ENCODE measurements at regions of chr19 and their contacts with region 1.

Region 1: GRCh38 chr19:2328401-2329148 is at the starts of genes LSM7 and SPPL2B:
- DNase-seq: peak; percentile 91 to 92 (median 91)
- H3K4me3 ChIP-seq: peak within 1 kb of the TSS; percentile 82 to 88
- H3K4me3 Mint-ChIP-seq: peak within 1 kb of the TSS; percentile 99 to 100 (median 100)
- H3K27ac ChIP-seq: peak within 1 kb of the TSS; percentile 76
- H3K27ac Mint-ChIP-seq: peak within 1 kb of the TSS; percentile 97 to 100 (median 99)
- H3K4me1 ChIP-seq: peaks cover 49% of the 10 kb centered on the region
- H3K4me1 Mint-ChIP-seq: peaks cover 22 to 61% (median 47%) of the 10 kb centered on the region in 4 donors
- H3K27me3 ChIP-seq: no peaks in the 10 kb centered on the region
- H3K27me3 Mint-ChIP-seq: no peaks in the 10 kb centered on the region
- total RNA-seq, gene LSM7: 107 to 108 TPM
- total RNA-seq, gene SPPL2B: 76.8 to 82.8 TPM

Region 2: DNA sequence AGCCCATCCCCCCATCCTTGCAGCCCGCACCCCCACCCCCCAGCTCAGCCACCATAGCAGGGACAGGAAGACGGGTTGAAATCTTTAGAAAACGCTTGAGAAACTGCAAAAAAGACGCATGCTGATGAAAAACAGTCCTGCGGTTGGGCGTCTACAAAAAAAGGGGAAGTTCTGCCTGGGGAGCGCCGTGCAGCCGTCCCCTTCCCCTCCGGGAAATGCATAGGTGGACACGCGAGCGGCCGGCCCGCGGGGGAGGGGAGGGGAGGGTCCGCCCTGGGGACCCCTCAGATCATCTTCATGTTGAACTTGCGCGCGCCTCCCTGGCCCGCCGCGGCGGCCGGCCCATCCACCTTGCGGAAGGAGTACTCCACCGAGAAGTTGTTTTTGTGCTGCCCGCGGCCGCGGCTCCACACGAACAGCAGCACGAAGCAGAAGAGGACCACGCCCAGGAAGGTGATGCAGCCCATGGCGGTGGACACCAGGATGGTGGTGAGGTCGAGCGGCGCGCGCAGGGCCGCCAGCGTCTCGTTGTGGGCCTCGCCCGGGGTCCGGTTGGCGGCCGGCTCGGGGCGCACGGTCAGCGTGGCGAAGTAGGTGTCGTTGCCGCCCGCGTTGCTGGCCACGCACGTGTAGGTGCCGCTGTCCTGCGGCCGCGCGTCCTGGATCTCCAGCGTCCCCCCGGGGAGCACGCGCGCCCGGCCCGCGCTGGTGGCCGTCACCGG is 38.7 kb before region 1 on chr19:
- CTCF ChIA-PET with region 1: no interaction called
- POLR2A ChIA-PET with region 1: interaction called, 8 read pairs
- intact Hi-C with region 1: loop called (anchors 5 kb)
- DNase-seq: peak; percentile 60 to 73 (median 65)
- H3K4me3 ChIP-seq: peak overlapping the region in 1 of 2 donors; percentile 67
- H3K4me3 Mint-ChIP-seq: peak overlapping the region; percentile 87 to 94 (median 90)
- H3K27ac ChIP-seq: peak overlapping the region; percentile 39
- H3K27ac Mint-ChIP-seq: peak overlapping the region; percentile 70 to 94 (median 86)
- H3K4me1 ChIP-seq: peaks cover 24% of the 10 kb centered on the region
- H3K4me1 Mint-ChIP-seq: peaks cover 10 to 39% (median 24%) of the 10 kb centered on the region in 4 donors
- H3K27me3 ChIP-seq: no peaks in the 10 kb centered on the region
- H3K27me3 Mint-ChIP-seq: peaks cover 0 to 2% of the 10 kb centered on the region in 2 donors

Region 3: DNA sequence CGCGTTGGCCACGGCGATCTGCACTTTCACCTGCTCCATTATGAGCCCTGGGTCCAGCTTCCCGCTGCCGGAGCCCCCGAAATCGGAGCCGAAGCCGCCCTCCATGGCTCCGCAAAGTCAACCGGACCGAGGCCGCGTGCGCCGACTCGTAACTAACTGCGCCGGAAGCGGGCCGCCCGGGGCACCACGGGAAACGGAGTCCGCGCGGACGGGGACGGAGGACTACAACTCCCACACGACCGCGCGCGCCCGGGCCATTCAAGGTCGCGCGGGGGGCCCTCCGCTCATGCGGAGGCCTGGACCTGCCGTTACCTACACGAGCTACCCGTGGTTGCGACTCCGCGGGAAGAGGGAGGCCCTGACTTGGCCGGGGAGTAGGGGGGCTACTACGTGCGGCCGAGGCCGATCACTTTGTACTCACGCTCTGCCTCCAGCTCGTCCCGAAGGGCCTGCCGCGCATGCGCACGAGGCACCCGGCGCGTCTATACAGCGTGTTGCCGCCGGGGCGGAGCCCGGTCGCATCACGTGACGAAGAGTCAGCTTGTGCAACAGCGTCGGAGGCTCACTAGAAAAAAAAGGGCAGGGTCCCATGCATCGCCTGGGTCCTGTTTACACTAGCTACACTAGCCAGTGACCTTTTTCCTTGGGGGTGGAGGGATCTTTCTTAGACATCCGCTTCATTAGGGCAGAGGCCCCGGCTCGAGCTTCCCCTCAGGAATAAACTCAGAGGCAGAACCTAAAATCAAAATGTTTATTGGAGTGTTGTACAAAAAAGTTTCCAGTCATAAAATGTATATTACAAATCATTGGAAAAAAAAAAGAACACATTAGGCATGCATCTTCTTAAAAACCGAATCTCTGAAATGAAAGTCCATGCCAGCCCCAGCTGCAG is 99.1 kb after region 1 on chr19 and contains the start of gene TIMM13:
- CTCF ChIA-PET with region 1: no interaction called
- POLR2A ChIA-PET with region 1: interaction called, 10 read pairs
- intact Hi-C with region 1: loop called (anchors 1 kb)
- DNase-seq: peak; percentile 96 to 99 (median 98)
- H3K4me3 ChIP-seq: peak within 1 kb of the TSS; percentile 61 to 79
- H3K4me3 Mint-ChIP-seq: peak within 1 kb of the TSS; percentile 90 to 97 (median 94)
- H3K27ac ChIP-seq: peak within 1 kb of the TSS; percentile 95
- H3K27ac Mint-ChIP-seq: peak within 1 kb of the TSS; percentile 93 to 99 (median 99)
- H3K4me1 ChIP-seq: peaks cover 21% of the 10 kb centered on the region
- H3K4me1 Mint-ChIP-seq: peaks cover 6 to 19% (median 12%) of the 10 kb centered on the region in 4 donors
- H3K27me3 ChIP-seq: no peaks in the 10 kb centered on the region
- H3K27me3 Mint-ChIP-seq: no peaks in the 10 kb centered on the region
- total RNA-seq, gene TIMM13: 30.6 to 31.6 TPM

Region 4: GRCh38 chr19:2503521-2504109 is 175.0 kb after region 1 on chr19:
- CTCF ChIA-PET with region 1: no interaction called
- POLR2A ChIA-PET with region 1: no interaction called
- intact Hi-C with region 1: no loop called
- DNase-seq: peak; percentile 74 to 91 (median 75)
- H3K4me3 ChIP-seq: peak overlapping the region in 1 of 2 donors; percentile 23
- H3K4me3 Mint-ChIP-seq: peak overlapping the region; percentile 48 to 89 (median 78)
- H3K27ac ChIP-seq: peak overlapping the region; percentile 74
- H3K27ac Mint-ChIP-seq: peak overlapping the region; percentile 93 to 97 (median 96)
- H3K4me1 ChIP-seq: peaks cover 25% of the 10 kb centered on the region
- H3K4me1 Mint-ChIP-seq: peaks cover 15 to 41% (median 24%) of the 10 kb centered on the region in 4 donors
- H3K27me3 ChIP-seq: no peaks in the 10 kb centered on the region
- H3K27me3 Mint-ChIP-seq: no peaks in the 10 kb centered on the region